Activated naive CD4-positive, alpha-beta T cell treated with anti-CD3 and anti-CD28 coated beads for 36 hours (primary cell): ENCODE measurements at regions of chr7 and their contacts with region 1.

Region 1: DNA sequence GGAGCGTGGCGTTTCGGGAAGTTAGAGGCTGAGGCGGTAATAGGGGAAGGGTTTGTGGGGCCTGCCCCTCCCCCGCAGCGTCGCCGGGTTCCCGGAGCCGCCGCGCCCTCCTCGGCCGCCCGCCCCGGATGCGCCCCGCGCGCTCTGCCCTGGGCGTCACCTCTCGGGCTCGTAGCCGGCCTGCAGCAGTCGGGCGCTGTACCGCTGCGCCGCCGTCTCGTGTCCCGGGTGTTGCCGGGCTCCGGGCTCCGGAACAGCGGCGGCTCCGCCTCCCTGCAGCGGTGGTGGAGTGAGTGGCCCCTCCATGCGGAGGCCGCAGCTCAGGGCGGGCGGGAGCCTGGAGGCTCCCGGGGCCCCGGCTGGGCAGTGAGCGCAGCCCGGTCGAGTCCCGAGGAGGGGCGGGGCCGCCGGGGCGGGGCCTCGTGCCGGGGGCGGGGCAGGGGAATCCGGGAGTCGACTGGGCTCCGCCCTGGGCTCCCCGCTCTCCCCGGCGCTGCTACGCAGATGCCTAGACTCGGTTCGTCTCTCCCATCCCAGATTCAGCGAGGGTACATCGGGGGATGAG is at the start of gene IMPDH1:
- DNase-seq: peak; percentile 86
- H3K4me3 Mint-ChIP-seq: peak within 1 kb of the TSS; percentile 85
- H3K27ac Mint-ChIP-seq: peak within 1 kb of the TSS; percentile 47
- H3K4me1 Mint-ChIP-seq: peaks cover 20% of the 10 kb centered on the region
- H3K27me3 Mint-ChIP-seq: peaks cover 2% of the 10 kb centered on the region
- total RNA-seq, gene IMPDH1: 44.3 to 45.9 TPM

Region 2: GRCh38 chr7:128381161-128381821 is 28.4 kb before region 1 on chr7:
- CTCF ChIA-PET with region 1: interaction called, 3 read pairs
- intact Hi-C with region 1: loop called (anchors 2 kb)
- DNase-seq: peak; percentile 61
- H3K4me3 Mint-ChIP-seq: no peak overlapping the region
- H3K27ac Mint-ChIP-seq: no peak overlapping the region
- H3K4me1 Mint-ChIP-seq: no peaks in the 10 kb centered on the region
- H3K27me3 Mint-ChIP-seq: no peaks in the 10 kb centered on the region

Region 3: DNA sequence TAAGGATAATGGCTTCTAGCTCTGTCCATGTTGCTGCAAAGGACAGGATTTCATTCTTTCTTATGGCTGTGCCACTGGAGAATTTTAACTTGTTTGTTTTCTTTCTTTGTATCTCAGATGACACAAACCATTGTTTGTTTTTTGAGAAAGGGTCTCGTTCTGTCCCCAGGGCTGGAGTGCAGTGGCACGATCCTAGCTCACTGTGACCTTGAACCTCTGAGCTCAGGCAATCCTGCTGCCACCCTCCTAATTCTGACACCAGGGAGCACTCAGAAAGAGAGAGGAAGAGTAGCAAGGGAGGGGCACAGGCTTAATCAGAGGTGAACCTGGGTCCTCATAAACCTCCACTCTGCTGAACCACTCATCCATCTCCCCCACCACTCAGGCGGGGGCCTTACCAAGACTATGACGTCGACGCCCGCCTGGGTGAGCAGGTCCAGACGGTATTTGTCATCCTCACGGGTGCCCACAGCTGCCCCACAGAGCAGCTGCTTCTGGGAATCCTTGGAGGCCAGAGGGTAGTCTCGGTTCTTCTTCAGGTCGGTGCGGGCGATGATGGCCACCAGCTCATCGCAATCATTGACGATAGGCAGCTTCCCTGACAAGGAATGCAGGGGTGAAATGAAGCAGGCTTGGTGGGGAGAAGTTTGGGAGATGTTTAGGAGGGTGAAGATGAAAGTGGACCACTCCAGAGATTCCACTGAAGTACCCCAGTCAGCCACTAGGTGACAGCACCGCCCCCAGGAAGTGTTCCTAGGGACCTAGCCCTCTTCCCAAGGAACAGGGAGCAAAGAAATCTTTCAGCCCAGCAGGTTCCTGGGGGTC is 11.4 kb before region 1 on chr7:
- CTCF ChIA-PET with region 1: interaction called, 34 read pairs
- intact Hi-C with region 1: no loop called
- DNase-seq: peak; percentile 65
- H3K4me3 Mint-ChIP-seq: no peak overlapping the region
- H3K27ac Mint-ChIP-seq: no peak overlapping the region
- H3K4me1 Mint-ChIP-seq: peaks cover 7% of the 10 kb centered on the region
- H3K27me3 Mint-ChIP-seq: no peaks in the 10 kb centered on the region